ENCODE measurements at regions of chr7 and their contacts with region 1.

Region 1: GRCh38 chr7:103929871-103930311 is 59.6 kb downstream of the RELN start:
- DNase-seq: no peak
- ATAC-seq: no peak
- H3K4me3 ChIP-seq: no peak overlapping the region
- H3K27ac ChIP-seq: no peak overlapping the region
- H3K4me1 ChIP-seq: no peaks in the 10 kb centered on the region
- H3K27me3 ChIP-seq: no peaks in the 10 kb centered on the region
- CTCF ChIP-seq: no peak
- POLR2A ChIP-seq: no peak

Region 2: GRCh38 chr7:103695521-103695920 is 234.4 kb before region 1 on chr7:
- intact Hi-C with region 1: loop called in 1 of 10 experiments (anchors 5 kb)
- DNase-seq: no peak
- ATAC-seq: no peak
- H3K4me3 ChIP-seq: no peak overlapping the region
- H3K27ac ChIP-seq: no peak overlapping the region
- H3K4me1 ChIP-seq: no peaks in the 10 kb centered on the region
- H3K27me3 ChIP-seq: no peaks in the 10 kb centered on the region
- CTCF ChIP-seq: no peak
- POLR2A ChIP-seq: no peak

Region 3: GRCh38 chr7:103879411-103879810 is 50.5 kb before region 1 on chr7:
- intact Hi-C with region 1: loop called in 1 of 10 experiments (anchors 10 kb)
- DNase-seq: no peak
- ATAC-seq: no peak
- H3K4me3 ChIP-seq: no peak overlapping the region
- H3K27ac ChIP-seq: no peak overlapping the region
- H3K4me1 ChIP-seq: no peaks in the 10 kb centered on the region
- H3K27me3 ChIP-seq: peaks cover 0 to 3% (median 0%) of the 10 kb centered on the region in 9 donors
- CTCF ChIP-seq: no peak
- POLR2A ChIP-seq: no peak

Region 4: DNA sequence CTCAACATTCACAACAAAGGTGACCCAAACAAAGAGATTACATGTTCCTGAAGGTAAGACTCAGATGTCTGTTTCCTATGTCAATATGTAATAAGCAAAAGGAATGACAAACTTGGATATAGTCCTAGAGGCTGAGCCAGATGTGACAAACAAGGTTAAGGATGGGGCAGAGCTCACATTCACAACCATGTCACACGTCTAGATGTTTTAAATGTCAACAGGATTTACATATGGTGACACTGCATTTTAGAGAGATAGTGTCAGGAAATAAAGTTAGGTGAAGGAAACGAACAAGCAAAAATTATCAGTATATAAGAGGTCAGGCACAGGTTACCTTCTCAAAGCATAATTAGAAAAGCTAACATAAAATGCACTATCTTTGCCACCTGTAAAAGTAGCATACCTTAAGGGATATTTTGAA is 51.1 kb after region 1 on chr7:
- intact Hi-C with region 1: no loop called
- DNase-seq: no peak
- ATAC-seq: no peak
- H3K4me3 ChIP-seq: no peak overlapping the region
- H3K27ac ChIP-seq: no peak overlapping the region
- H3K4me1 ChIP-seq: no peaks in the 10 kb centered on the region
- H3K27me3 ChIP-seq: peaks cover 0 to 27% (median 0%) of the 10 kb centered on the region in 9 donors
- CTCF ChIP-seq: no peak
- POLR2A ChIP-seq: no peak